Left cardiac atrium (tissue), 4 donors: ENCODE measurements at regions of chr9 and their contacts with region 1.

Region 1: GRCh38 chr9:107340920-107341632 is 58.0 kb downstream of the RAD23B start:
- DNase-seq: peak; percentile 76
- ATAC-seq: peak; percentile 58

Region 2: GRCh38 chr9:106503759-106504158 is 837.3 kb before region 1 on chr9:
- intact Hi-C with region 1: no loop called
- DNase-seq: no peak
- ATAC-seq: no peak

Region 3: GRCh38 chr9:107158321-107158720 is 182.8 kb before region 1 on chr9:
- intact Hi-C with region 1: loop called in 1 of 2 experiments (anchors 10 kb)
- DNase-seq: no peak
- ATAC-seq: peak in 1 of 2 donors; percentile 56

Region 4: DNA sequence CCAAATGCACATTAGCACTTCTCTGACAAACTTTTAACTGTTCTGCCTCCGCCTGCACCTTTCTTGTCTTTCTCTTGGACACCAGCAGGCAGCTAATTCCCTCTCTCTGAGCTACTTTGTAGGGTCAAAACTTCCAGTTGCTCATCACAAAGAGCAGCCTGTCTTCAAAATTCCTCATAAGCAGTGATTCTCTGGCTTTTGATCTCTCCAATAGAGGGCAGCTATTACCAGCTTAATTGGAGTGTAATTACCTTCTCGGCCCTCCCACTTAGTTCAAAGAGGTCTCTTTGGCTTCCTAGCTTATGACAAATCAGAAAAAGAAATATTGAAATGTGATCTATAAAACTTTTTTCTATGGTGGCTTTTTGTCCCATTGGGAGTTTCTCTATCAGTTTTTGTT is 101.6 kb before region 1 on chr9:
- intact Hi-C with region 1: loop called (anchors 5 kb)
- DNase-seq: no peak
- ATAC-seq: peak; percentile 57 to 67

Region 5: DNA sequence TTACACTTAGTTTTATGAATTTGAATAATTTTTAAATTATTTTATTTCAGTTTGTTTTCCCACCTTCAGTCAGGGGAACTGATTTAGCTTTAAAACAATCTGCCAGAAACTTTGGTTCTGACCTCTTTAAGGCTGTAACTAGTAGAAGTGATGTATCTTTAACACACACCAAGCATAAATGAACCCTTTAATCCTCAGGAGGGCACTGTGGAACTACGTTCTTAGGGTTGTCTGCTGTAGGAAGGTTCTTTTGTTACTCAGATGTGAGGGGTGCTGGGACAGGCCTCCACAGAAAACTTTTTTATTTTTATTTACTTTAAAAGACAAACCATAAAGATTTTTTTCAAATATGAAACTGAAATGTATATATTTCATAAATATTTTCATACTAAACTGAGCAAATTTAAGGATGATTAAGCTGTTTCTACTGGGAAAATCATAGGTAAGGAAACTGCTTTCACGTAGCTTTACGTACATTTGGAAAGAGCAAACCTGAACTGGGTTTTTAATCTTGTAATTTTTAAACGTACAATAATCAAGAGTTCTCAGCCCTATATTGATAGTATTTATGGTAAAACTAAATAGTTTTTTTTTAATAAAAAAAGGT is 143.1 kb after region 1 on chr9:
- intact Hi-C with region 1: no loop called
- DNase-seq: no peak
- ATAC-seq: peak; percentile 35 to 56